HepG2 (cell line): ENCODE measurements at regions of chr3 and their contacts with region 1.

Region 1: DNA sequence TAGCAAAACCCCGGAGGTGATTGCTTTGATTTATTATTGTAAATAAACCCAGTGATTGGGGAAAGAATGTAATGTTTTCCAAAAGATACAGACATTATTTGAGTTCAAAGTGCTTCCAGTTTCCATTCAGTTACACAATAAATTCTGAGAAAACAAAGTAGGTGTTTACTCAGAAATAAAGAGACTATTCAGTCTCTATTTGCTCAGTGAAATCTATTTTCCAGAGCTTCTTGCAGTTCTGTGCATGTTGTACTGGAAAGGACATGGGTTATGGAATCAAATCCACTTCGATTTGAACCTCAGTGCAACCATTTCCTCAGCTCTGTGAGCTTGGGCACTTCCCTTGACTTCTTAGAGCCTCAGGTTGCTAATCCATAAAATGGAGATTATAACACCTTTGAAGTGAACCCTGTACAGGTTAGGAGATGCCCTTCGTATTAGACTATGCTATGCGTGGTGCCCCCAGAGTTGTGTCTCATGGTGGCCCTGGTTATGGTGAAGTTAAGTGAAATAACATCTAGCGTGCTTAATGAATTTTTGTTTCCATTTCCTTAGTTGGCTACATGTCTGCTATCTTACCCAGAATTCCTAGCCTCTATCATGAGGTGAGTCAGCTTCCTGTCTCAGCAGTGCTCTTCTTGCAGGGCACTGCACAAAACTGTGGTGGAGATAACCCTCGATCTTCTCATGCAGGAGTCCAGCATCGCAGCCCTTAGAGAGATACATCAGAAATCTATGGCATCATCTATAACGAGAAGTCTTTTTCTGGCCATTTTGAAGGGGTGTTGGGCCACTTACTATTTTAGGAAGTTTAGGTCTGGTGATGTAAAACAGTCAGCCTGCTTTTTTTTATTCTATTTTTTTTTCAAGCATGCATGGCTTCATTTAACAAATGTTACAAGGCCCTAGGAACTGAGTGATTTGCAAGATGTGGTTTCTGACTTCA is 97.7 kb downstream of the RPL39L start:
- DNase-seq: peak; percentile 97
- ATAC-seq: peak; percentile 74
- H3K4me3 ChIP-seq: peak overlapping the region; percentile 67 to 82 (median 81); a peak in 4 of 6 replicates
- H3K27ac ChIP-seq: peak overlapping the region; percentile 99
- H3K4me1 ChIP-seq: peaks cover 78% of the 10 kb centered on the region
- H3K27me3 ChIP-seq: no peaks in the 10 kb centered on the region; a peak in 1 of 5 replicates
- CTCF ChIP-seq: no peak
- EP300 ChIP-seq: peak; percentile 94 to 99
- POLR2A ChIP-seq: peak in 1 of 2 experiments; percentile 57; a peak in 3 of 4 replicates
- RAD21 ChIP-seq: peak; percentile 42; the same call in 1 of the 2 replicates

Region 2: DNA sequence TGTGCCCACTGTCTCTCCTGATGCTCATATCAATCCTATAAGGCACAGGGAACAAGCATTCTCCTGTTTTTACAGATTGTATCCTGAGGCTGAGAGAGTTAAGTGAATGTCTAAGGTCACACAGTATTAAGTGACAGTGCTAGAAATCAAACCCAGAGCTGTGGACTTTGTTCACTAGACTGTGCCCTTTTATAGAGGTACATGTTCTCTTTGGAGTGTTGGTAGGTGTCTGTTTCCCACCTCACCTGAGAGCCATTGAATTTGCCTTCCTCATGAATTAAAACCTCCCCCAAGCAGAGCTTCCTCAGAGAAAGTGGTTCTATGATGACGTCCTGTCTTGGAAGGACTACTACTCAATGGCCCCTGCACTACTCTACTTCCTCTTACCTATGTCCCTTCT is 186.7 kb before region 1 on chr3:
- CTCF ChIA-PET with region 1: no interaction called
- POLR2A ChIA-PET with region 1: interaction called, 12 read pairs
- in situ Hi-C with region 1: no loop called
- intact Hi-C with region 1: no loop called
- DNase-seq: no peak
- ATAC-seq: no peak
- H3K4me3 ChIP-seq: no peak overlapping the region
- H3K27ac ChIP-seq: no peak overlapping the region
- H3K4me1 ChIP-seq: peaks cover 10% of the 10 kb centered on the region; the same call in 1 of the 2 replicates
- H3K27me3 ChIP-seq: 0 out of 5 replicates have a peak, but pooled peaks cover 0 to 3% of the 10 kb centered on the region in 2 experiments
- CTCF ChIP-seq: no peak
- EP300 ChIP-seq: no peak
- POLR2A ChIP-seq: no peak
- RAD21 ChIP-seq: no peak

Region 3: DNA sequence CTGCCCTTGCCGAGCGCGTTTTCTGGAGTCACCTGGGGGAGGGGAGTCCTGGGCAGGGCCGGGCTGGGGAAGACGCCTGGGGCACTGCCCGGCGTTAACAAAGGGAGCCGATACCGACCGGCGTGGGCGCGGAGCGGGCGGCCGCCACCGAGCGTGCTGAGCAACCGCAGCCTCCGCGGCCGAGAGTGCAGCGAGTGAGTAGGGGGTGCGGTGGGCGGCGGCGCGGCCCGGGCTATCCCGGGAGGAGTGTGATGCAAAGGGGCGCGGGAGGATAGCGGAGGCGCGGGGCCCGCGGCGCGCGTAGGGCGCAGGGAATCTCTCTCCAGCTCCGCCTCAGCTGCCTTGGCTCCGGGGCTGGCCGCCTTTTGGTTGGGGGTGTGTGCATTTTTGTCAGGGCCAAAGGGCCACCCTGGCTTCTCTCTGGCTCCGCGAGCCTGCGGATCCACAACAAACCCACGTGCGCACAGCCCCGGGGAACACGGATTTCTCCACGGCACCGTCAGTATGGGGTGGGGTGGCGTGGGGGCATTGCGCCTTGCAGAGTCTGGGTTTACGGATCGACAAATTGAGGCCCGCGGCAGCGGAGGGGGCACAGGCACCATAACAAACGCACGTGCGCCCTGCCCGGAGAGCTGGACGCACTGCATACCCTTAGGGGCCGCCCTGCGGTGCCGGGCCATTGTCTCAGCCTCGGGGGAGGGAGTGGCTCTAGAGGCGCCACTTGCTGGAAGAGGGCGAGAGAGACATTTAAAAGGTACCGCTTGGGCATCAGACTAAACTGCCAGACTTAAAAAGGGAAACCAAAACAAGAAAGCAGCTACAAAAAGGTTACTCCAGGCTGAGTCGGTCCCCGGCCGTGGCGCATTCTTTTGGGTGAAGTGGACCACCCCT is 110.7 kb before region 1 on chr3:
- CTCF ChIA-PET with region 1: no interaction called
- POLR2A ChIA-PET with region 1: interaction called, 57 read pairs
- in situ Hi-C with region 1: no loop called
- intact Hi-C with region 1: loop called (anchors 5 kb)
- DNase-seq: peak; percentile 71
- ATAC-seq: peak; percentile 84
- H3K4me3 ChIP-seq: peak overlapping the region; percentile 68 to 81 (median 71)
- H3K27ac ChIP-seq: peak overlapping the region; percentile 45
- H3K4me1 ChIP-seq: peaks cover 25% of the 10 kb centered on the region
- H3K27me3 ChIP-seq: peaks cover 0 to 12% of the 10 kb centered on the region in 2 experiments; a peak in 3 of 5 replicates
- CTCF ChIP-seq: peak; percentile 53
- EP300 ChIP-seq: no peak
- POLR2A ChIP-seq: 0 out of 4 replicates have a peak, but pooled peaks of 1 of the 2 experiments have one; percentile 34
- RAD21 ChIP-seq: no peak; the same call in 1 of the 2 replicates

Region 4: GRCh38 chr3:186976837-186977750 is 64.5 kb before region 1 on chr3:
- CTCF ChIA-PET with region 1: no interaction called
- POLR2A ChIA-PET with region 1: interaction called, 23 read pairs
- in situ Hi-C with region 1: no loop called
- intact Hi-C with region 1: loop called (anchors 5 kb)
- DNase-seq: no peak
- ATAC-seq: no peak
- H3K4me3 ChIP-seq: no peak overlapping the region
- H3K27ac ChIP-seq: no peak overlapping the region
- H3K4me1 ChIP-seq: peaks cover 77% of the 10 kb centered on the region
- H3K27me3 ChIP-seq: no peaks in the 10 kb centered on the region
- CTCF ChIP-seq: no peak
- EP300 ChIP-seq: no peak
- POLR2A ChIP-seq: no peak
- RAD21 ChIP-seq: no peak

Region 5: GRCh38 chr3:187066228-187066995 is 24.8 kb after region 1 on chr3:
- CTCF ChIA-PET with region 1: no interaction called
- POLR2A ChIA-PET with region 1: interaction called, 9 read pairs
- in situ Hi-C with region 1: no loop called
- intact Hi-C with region 1: loop called (anchors 1 kb)
- DNase-seq: peak; percentile 65
- ATAC-seq: peak; percentile 73
- H3K4me3 ChIP-seq: no peak overlapping the region
- H3K27ac ChIP-seq: no peak overlapping the region
- H3K4me1 ChIP-seq: peaks cover 66% of the 10 kb centered on the region
- H3K27me3 ChIP-seq: no peaks in the 10 kb centered on the region
- CTCF ChIP-seq: peak; percentile 45
- EP300 ChIP-seq: no peak
- POLR2A ChIP-seq: no peak
- RAD21 ChIP-seq: peak; percentile 48; the same call in 1 of the 2 replicates

Region 6: DNA sequence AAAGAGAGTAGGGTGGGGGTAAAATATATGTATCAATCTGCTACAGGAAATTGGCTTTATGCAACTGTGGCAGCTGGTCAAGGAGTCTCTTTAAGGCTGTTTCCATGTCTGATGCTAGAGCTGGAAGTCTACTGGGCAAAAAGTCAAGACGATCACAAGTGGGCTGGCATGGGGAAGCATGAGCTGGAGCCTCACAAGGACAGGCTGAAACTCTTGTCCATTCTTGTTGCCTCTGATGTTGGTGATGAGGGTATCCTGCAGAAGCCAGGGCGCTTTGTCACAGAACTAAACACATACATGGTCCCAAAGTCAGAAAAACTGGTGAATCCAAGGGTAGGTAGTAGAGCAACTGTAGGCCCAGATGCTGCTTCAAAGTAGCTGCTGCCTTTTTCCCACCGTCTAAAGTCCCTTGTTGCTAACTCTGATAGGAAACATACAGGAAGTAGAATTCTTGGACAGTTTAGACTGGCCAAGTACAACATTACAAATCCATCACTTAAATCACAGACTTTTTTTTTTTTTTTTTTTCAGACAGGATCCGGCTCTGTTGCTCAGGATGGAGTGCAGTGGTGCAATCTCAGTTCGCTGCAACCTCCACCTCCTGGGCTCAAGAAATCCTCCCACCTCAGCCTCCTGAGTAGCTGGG is 43.5 kb after region 1 on chr3:
- CTCF ChIA-PET with region 1: no interaction called
- POLR2A ChIA-PET with region 1: interaction called, 16 read pairs
- in situ Hi-C with region 1: no loop called
- intact Hi-C with region 1: no loop called
- DNase-seq: no peak
- ATAC-seq: peak; percentile 17; the same call in 2 of the 3 replicates
- H3K4me3 ChIP-seq: no peak overlapping the region
- H3K27ac ChIP-seq: no peak overlapping the region
- H3K4me1 ChIP-seq: peaks cover 47% of the 10 kb centered on the region
- H3K27me3 ChIP-seq: no peaks in the 10 kb centered on the region
- CTCF ChIP-seq: no peak
- EP300 ChIP-seq: no peak
- POLR2A ChIP-seq: no peak
- RAD21 ChIP-seq: no peak

Region 7: GRCh38 chr3:187101184-187102072 is 59.8 kb after region 1 on chr3:
- CTCF ChIA-PET with region 1: no interaction called
- POLR2A ChIA-PET with region 1: interaction called, 12 read pairs
- in situ Hi-C with region 1: no loop called
- intact Hi-C with region 1: no loop called
- DNase-seq: peak; percentile 43
- ATAC-seq: peak; percentile 86
- H3K4me3 ChIP-seq: peak overlapping the region; percentile 28 to 41 (median 35)
- H3K27ac ChIP-seq: no peak overlapping the region
- H3K4me1 ChIP-seq: peaks cover 17% of the 10 kb centered on the region
- H3K27me3 ChIP-seq: peaks cover 0 to 10% of the 10 kb centered on the region in 2 experiments; a peak in 2 of 5 replicates
- CTCF ChIP-seq: no peak
- EP300 ChIP-seq: no peak
- POLR2A ChIP-seq: no peak
- RAD21 ChIP-seq: no peak

Region 8: DNA sequence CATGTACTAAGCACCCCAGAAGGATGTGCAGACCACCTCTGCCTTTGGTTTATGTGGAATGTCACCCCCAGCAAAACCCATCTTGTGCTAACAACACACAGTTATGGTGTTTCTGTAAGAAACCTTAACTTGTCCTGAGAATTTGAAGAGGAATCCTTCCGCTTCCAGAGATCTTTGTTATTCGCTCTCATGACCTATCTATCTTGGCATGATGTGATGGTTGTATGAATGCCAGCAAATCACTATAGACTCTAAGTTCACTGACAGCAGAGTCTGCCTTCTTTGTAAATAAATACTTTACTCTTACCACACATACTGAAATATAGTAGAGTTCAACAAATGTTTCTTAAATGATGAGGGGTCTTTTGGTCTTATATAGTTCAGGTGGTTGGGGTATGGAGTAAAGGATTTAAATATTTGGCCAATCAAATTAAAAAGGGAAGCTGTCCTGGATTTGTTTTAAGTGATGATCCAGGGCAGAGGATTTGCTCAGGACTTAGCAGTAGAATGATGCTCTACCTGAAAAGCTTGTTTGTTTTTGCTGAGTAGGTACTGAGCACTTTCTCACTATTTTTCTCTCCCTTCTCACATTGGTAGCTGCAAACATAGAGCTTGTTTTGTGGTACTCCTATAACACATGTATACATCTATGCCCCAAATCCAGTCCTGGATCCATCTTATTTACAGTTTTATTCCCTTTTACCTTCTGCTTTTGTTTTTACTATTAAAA is 127.8 kb after region 1 on chr3:
- CTCF ChIA-PET with region 1: no interaction called
- POLR2A ChIA-PET with region 1: no interaction called
- in situ Hi-C with region 1: no loop called
- intact Hi-C with region 1: no loop called
- DNase-seq: no peak
- ATAC-seq: no peak
- H3K4me3 ChIP-seq: no peak overlapping the region
- H3K27ac ChIP-seq: no peak overlapping the region
- H3K4me1 ChIP-seq: peaks cover 17% of the 10 kb centered on the region
- H3K27me3 ChIP-seq: no peaks in the 10 kb centered on the region
- CTCF ChIP-seq: no peak
- EP300 ChIP-seq: no peak
- POLR2A ChIP-seq: no peak
- RAD21 ChIP-seq: no peak